Mammary epithelial cell (primary cell): ENCODE measurements at regions of chr7 and their contacts with region 1.

Region 1: GRCh38 chr7:29878081-29878688 is 71.9 kb downstream of the WIPF3 start:
- DNase-seq: peak; percentile 33
- H3K4me3 ChIP-seq: no peak overlapping the region
- H3K27ac ChIP-seq: no peak overlapping the region
- H3K4me1 ChIP-seq: no peaks in the 10 kb centered on the region
- H3K27me3 ChIP-seq: no peaks in the 10 kb centered on the region
- CTCF ChIP-seq: peak; percentile 67 to 80

Region 2: GRCh38 chr7:29833929-29834328 is 44.3 kb before region 1 on chr7:
- CTCF ChIA-PET with region 1: no interaction called
- dilution Hi-C with region 1: no loop called
- in situ Hi-C with region 1: no loop called
- intact Hi-C with region 1: no loop called
- DNase-seq: no peak
- H3K4me3 ChIP-seq: no peak overlapping the region
- H3K27ac ChIP-seq: no peak overlapping the region
- H3K4me1 ChIP-seq: no peaks in the 10 kb centered on the region
- H3K27me3 ChIP-seq: peaks cover 3% of the 10 kb centered on the region
- CTCF ChIP-seq: no peak

Region 3: GRCh38 chr7:29921404-29922010 is 43.3 kb after region 1 on chr7:
- CTCF ChIA-PET with region 1: interaction called, 5 read pairs
- dilution Hi-C with region 1: no loop called
- in situ Hi-C with region 1: no loop called
- intact Hi-C with region 1: loop called (anchors 1 kb)
- DNase-seq: peak; percentile 45
- H3K4me3 ChIP-seq: no peak overlapping the region
- H3K27ac ChIP-seq: no peak overlapping the region
- H3K4me1 ChIP-seq: no peaks in the 10 kb centered on the region
- H3K27me3 ChIP-seq: no peaks in the 10 kb centered on the region
- CTCF ChIP-seq: peak; percentile 90 to 94

Region 4: GRCh38 chr7:30062591-30062990 is 184.4 kb after region 1 on chr7:
- CTCF ChIA-PET with region 1: no interaction called
- dilution Hi-C with region 1: no loop called
- in situ Hi-C with region 1: no loop called
- intact Hi-C with region 1: loop called (anchors 1 kb)
- DNase-seq: peak; percentile 5
- H3K4me3 ChIP-seq: no peak overlapping the region
- H3K27ac ChIP-seq: no peak overlapping the region
- H3K4me1 ChIP-seq: no peaks in the 10 kb centered on the region
- H3K27me3 ChIP-seq: no peaks in the 10 kb centered on the region
- CTCF ChIP-seq: peak; percentile 50 to 53

Region 5: GRCh38 chr7:30074422-30075030 is 196.3 kb after region 1 on chr7:
- CTCF ChIA-PET with region 1: no interaction called
- dilution Hi-C with region 1: no loop called
- in situ Hi-C with region 1: loop called in 1 of 2 experiments (anchors 10 kb)
- intact Hi-C with region 1: loop called (anchors 1 kb)
- DNase-seq: peak; percentile 31
- H3K4me3 ChIP-seq: no peak overlapping the region
- H3K27ac ChIP-seq: no peak overlapping the region
- H3K4me1 ChIP-seq: no peaks in the 10 kb centered on the region
- H3K27me3 ChIP-seq: no peaks in the 10 kb centered on the region
- CTCF ChIP-seq: peak; percentile 34 to 58